Activated B cell treated with CpG ODN at 0.5 μM for 24 hours (primary cell): ENCODE measurements at regions of chr6 and their contacts with region 1.

Region 1: GRCh38 chr6:160455541-160456213 is 107.5 kb downstream of the SLC22A3 start:
- DNase-seq: peak; percentile 52
- ATAC-seq: peak; percentile 88
- H3K4me3 Mint-ChIP-seq: no peak overlapping the region
- H3K27ac Mint-ChIP-seq: no peak overlapping the region
- H3K4me1 Mint-ChIP-seq: peaks cover 18% of the 10 kb centered on the region
- H3K27me3 Mint-ChIP-seq: peaks cover 11% of the 10 kb centered on the region
- CTCF ChIP-seq: peak; percentile 27

Region 2: DNA sequence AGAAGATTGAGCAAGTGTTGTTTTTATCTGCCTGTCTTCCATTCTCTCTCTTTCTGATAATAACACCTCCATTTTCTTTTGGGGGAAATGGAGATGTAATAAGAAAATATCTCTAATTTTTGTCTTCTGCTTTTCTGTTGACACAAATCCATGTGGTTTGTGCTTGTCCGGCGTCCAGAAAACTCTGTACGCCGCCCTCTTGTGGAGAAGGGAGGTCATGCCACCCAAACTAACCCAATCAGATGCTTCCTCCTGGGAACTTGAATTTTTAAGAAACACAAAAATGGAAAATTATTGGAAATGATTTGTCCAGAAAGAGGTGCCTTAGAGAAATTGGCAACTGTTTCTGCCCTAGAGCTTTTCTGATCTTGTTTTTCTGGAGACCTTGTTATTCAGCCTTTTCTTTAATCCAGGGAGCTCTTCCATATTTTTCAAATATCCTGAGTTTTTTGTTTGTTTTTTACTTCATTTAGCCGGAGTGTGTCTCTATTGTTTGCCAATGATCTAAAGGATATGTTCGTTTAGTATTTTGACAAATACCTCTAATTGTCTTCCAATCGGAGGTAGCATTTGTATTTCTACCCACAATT is 1304.3 kb before region 1 on chr6:
- CTCF ChIA-PET with region 1: no interaction called
- POLR2A ChIA-PET with region 1: no interaction called
- intact Hi-C with region 1: loop called (anchors 5 kb)
- DNase-seq: no peak
- ATAC-seq: peak; percentile 79
- H3K4me3 Mint-ChIP-seq: no peak overlapping the region
- H3K27ac Mint-ChIP-seq: no peak overlapping the region
- H3K4me1 Mint-ChIP-seq: peaks cover 4% of the 10 kb centered on the region
- H3K27me3 Mint-ChIP-seq: peaks cover 7% of the 10 kb centered on the region
- CTCF ChIP-seq: peak; percentile 47

Region 3: DNA sequence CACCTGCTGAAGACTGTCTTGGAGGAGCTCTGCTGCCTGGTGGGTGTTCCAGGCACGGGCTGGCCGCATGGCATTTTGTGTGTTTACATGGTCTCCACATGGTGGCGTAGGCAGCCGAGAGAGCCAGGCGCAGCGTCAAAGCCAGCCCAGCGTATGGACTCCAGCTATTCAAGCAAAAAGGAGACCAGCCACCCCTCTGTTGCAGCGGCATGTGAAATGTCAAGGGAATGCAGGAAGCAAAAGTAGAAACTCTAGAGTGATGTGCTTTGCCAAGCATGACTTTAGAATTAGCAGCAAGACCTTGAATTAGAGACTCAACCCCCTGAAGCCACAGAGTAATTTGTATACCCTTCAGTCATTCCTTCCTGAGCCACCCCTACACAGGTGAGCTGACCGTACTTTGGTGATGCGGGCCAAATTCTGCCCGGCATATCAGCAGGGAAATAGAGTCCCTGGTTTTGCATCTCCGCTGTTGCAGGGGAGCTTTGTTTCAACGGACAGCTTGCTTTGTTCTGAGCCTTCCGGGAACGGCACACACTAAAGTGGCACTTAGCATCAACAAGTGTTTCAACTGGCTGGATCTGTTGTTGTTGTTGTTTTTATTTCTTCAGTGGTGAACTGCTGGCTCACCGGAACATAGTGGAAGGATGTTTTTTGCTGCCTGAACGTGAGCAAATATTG is 1237.9 kb before region 1 on chr6:
- CTCF ChIA-PET with region 1: no interaction called
- POLR2A ChIA-PET with region 1: no interaction called
- intact Hi-C with region 1: loop called (anchors 2 kb)
- DNase-seq: no peak
- ATAC-seq: peak; percentile 40
- H3K4me3 Mint-ChIP-seq: peak overlapping the region; percentile 13
- H3K27ac Mint-ChIP-seq: no peak overlapping the region
- H3K4me1 Mint-ChIP-seq: peaks cover 16% of the 10 kb centered on the region
- H3K27me3 Mint-ChIP-seq: peaks cover 13% of the 10 kb centered on the region
- CTCF ChIP-seq: no peak

Region 4: DNA sequence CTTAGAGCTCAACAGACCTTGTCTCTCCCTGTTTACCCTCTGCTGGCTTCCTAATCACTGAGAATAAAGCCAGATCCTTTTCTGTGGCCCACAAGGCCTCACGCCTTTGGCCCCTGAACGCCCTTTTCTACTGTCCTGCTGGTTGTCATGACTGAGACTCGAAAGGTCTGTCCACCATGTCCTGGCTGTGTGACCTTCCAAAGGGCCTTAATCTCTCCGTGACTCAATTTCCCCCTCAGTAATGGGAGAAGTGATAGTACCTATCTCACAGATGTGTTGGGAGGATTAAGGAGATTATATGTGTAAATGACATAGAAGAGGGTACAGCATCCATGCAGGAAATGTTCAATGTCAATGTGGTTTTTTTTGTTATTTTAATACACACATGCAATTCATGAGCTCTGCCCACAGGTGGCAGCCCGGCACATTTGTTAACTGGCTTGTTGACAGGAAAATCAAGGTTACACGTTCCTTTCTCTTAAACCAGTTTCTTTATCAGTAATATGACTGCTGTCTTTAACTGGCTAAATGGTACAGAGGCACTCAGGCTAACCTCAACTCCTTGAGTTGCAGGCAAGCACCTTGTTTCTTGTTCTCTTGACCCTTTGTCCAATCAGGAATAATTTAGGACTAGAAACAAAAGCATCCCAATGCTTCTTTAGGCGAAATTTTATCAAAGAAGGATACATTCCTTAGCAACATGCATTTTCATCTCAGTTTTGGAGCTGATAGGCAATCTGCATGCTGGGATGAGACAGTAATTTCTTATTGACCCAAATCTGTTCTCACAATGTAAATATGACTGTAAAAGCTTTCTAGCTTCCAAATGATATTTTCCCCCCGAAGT is 317.5 kb before region 1 on chr6:
- CTCF ChIA-PET with region 1: interaction called, 10 read pairs
- POLR2A ChIA-PET with region 1: no interaction called
- intact Hi-C with region 1: loop called (anchors 1 kb)
- DNase-seq: no peak
- ATAC-seq: no peak
- H3K4me3 Mint-ChIP-seq: no peak overlapping the region
- H3K27ac Mint-ChIP-seq: no peak overlapping the region
- H3K4me1 Mint-ChIP-seq: no peaks in the 10 kb centered on the region
- H3K27me3 Mint-ChIP-seq: no peaks in the 10 kb centered on the region
- CTCF ChIP-seq: no peak